ENCODE measurements at regions of chr1 and their contacts with region 1.

Region 1: GRCh38 chr1:1959840-1960479 is 40.9 kb upstream of the TMEM52 start:
- DNase-seq: peak; percentile 77 to 96 (median 89)
- ATAC-seq: peak; percentile 94 to 99 (median 96)
- H3K4me3 ChIP-seq: no peak overlapping the region
- H3K27ac ChIP-seq: no peak overlapping the region
- H3K4me1 ChIP-seq: no peaks in the 10 kb centered on the region
- H3K27me3 ChIP-seq: no peaks in the 10 kb centered on the region
- CTCF ChIP-seq: peak; percentile 62 to 79 (median 70)

Region 2: GRCh38 chr1:2031546-2032540 is 71.9 kb after region 1 on chr1:
- intact Hi-C with region 1: loop called in 1 of 3 experiments (anchors 10 kb)
- DNase-seq: no peak
- ATAC-seq: no peak
- H3K4me3 ChIP-seq: no peak overlapping the region
- H3K27ac ChIP-seq: no peak overlapping the region
- H3K4me1 ChIP-seq: no peaks in the 10 kb centered on the region
- H3K27me3 ChIP-seq: no peaks in the 10 kb centered on the region
- CTCF ChIP-seq: no peak

Region 3: DNA sequence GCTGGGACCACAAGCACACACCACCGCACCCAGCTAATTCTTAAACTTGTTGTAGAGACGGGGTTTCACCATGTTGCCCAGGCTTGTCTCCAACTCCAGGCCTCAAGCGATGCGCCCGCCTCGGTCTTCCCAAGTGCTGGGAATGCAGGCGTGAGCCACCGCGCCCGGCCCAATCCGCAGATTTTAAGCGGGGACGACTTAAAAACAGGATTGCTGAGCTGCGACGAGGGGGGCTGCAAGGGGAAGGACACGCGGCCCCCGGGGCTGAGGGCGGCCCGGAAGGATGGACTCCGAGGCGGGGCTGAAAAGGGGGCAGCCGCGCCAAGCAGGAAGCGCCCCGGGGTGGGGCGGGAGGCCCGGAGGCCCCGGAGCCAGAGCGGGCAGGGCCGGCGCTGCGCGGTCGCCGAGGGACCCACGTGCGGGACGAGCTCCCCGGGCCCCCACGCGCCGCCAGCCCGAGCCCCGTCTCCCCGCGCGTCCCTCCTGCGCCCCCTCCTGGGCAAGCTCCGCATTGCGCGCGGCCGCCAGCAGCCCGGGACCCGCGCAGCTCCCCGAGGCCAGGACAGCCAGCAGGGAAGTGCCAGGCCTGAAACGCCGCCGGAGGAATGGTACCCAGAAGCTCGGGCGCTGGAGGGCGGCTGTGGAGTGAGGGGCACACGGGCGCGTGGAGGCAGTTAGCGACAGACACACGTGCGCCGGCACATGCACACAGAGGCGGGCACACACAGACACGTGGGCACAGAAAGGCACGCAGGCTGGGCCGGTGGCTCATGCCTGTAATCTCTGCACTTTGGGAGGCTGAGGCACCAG is 84.8 kb after region 1 on chr1:
- intact Hi-C with region 1: loop called in 2 of 3 experiments (anchors 5 to 10 kb)
- DNase-seq: peak; percentile 49 to 95 (median 79)
- ATAC-seq: peak; percentile 71 to 86 (median 81)
- H3K4me3 ChIP-seq: peak overlapping the region in 2 of 4 donors; percentile 25 to 33
- H3K27ac ChIP-seq: no peak overlapping the region
- H3K4me1 ChIP-seq: peaks cover 0 to 8% (median 4%) of the 10 kb centered on the region in 3 donors
- H3K27me3 ChIP-seq: no peaks in the 10 kb centered on the region
- CTCF ChIP-seq: peak; percentile 67 to 87 (median 81)

Region 4: DNA sequence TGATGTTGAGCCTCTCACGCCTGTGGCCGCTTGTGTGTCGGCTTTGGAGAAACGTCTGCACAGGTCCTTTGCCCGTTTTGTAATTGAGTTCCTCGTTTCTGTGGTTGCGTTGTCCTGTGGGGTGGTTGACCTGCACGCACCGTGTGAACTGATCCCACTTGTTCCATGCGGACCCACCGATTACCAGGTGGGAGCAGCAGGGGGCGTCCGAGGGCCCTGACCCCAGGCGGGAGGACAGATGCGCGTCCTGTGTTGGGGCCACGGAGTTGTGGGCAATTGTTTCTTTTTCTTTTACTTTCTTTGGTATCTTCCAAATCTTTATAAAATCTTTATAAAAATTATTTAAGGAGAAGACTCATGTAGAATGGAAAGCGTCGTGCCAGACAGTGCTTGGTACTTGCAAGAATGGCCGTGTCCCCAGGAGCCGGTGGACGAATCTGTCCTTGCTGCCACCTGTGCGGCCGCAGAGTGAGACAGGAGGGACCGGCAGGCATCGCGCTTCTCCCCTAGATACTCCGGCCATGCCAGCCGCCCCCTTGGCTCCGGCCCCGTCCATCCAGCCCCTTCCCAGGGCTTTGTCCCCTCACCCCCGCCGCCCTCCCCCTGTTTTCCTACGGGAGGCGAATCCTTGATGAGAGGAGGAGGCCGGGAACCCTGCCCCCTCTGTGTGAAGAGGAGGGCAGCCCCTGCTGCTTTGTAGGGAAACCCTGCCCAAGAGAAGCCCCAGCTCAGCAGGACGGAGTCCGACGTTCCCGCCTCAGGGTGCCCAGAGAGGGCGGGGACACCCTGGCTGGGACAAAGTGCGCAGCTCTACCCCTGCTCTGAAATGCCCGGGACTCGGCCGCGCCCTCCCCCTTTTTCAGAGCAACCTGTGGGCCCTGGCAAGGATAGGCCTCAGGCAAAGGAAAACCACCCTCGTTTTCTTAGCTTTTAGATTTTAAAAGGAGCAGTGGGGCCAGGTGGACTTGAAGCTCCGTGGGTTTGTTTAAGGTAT is 131.9 kb after region 1 on chr1:
- intact Hi-C with region 1: no loop called
- DNase-seq: peak in 3 of 6 donors; percentile 28 to 75 (median 42)
- ATAC-seq: peak in 2 of 4 donors; percentile 38 to 72
- H3K4me3 ChIP-seq: no peak overlapping the region
- H3K27ac ChIP-seq: no peak overlapping the region
- H3K4me1 ChIP-seq: no peaks in the 10 kb centered on the region
- H3K27me3 ChIP-seq: no peaks in the 10 kb centered on the region
- CTCF ChIP-seq: peak in 3 of 4 donors; percentile 18 to 30 (median 24)

Region 5: DNA sequence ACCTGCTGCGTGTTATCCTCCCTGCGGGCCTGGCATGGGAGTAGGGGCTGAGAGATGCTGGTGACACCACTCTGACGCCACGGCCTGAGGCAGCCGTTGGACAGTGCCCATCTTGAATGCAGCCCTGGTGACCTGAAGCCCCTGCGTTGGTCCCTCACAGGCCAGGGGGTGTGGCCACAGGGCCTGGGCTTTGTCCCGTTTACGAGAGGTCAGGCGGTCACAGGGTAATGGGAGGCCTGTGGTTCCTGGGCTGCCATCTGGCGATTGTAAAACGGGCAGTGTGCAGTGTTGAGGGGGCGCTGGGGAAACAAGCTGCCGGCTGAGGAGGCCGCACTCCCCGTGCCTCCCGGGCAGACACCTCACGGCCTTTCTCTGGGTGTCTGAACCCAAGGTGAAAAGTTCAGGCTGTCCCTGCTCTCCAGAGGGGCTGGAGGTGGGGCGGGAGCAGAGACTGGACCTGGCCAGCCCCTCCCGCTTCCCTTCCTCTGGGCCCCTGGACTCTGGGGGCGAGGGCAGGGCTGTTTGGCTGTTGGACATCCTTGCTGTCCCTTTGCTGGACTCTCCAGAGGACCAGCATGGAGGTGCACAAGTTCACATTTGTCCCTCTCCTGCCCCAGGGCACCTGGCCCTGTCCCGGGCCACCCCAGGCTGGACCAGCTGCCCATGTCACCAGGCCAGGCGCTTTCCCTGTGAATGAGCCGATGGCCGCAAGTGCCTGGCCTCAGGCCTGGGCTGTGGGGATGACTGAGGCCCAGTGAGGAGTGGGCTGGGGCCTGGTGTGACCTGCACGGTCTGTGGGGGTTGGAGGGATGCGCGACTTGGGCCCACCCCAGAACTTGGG is 310.5 kb after region 1 on chr1:
- intact Hi-C with region 1: no loop called
- DNase-seq: peak in 2 of 6 donors; percentile 49 to 70
- ATAC-seq: no peak
- H3K4me3 ChIP-seq: no peak overlapping the region
- H3K27ac ChIP-seq: no peak overlapping the region
- H3K4me1 ChIP-seq: no peaks in the 10 kb centered on the region
- H3K27me3 ChIP-seq: no peaks in the 10 kb centered on the region
- CTCF ChIP-seq: no peak